ENCODE measurements at regions of chr1 and their contacts with region 1.

Region 1: GRCh38 chr1:41516168-41517061 is 31.9 kb upstream of the EDN2 start:
- DNase-seq: peak; percentile 95

Region 2: DNA sequence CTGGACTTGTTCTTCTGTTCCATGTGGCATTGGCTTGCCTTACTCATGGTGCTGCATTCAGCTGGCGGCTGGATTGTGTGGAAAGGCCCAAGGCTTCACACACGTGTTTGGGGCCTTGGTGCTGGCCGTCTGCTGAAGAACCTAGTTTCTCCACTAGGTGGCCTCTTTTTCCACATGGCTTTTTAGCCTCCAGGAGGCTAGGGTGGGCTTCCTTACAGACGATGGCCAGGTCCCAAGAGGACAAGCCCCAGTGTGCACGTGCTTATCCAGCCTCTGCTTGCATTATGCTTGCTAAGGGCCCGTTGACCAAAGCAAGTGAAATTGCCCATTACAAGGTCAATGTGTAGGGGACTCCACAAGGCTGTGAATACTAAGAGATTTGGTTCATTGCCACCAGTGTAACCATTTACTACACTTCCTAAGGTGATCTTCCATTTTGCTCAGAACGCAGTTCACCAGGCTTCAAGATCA is 202.7 kb before region 1 on chr1:
- CTCF ChIA-PET with region 1: no interaction called
- POLR2A ChIA-PET with region 1: no interaction called
- DNase-seq: peak; percentile 70

Region 3: GRCh38 chr1:41537788-41538351 is 21.5 kb after region 1 on chr1:
- CTCF ChIA-PET with region 1: interaction called, 12 read pairs
- POLR2A ChIA-PET with region 1: no interaction called
- DNase-seq: peak; percentile 26

Measured in HEK293T (cell line).